ENCODE measurements at regions of chrX and their contacts with region 1.

Region 1: DNA sequence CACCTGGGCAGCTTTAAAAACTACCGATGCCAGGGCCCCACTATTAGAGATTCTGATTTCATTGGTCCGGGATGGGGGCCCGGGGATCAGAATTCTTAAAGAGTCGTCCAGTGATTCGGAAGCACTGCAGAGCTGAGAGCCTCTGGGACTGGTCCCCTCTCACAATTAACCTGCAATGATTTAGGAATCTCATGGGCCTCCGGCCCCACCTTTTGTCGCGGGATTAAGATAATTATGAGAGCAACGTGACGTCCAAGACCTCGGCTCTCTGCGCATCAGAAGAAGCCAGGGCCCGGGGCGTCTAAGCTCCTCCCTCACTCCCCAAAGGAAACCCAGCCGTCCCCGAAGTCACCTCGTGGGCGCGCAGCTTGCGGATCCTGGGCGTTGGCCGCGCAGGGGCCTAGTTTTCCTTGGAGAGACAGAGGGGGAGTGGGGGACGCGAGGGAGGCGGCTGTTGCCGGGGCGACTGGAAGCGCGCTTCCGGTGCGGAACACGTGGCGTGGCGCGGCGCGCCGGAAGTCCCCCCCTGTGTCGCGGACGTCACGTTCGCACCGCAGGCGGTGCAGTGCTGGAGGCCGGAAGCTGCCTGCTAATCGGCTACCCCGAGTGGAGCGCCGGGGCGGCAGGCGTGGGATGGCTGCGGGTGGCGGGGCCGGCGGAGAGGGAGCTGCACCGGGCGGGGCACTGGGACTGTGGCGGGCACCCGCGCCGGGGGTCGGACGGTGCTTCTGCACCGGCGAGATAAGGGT is at the start of gene GEMIN8:
- DNase-seq: peak; percentile 76
- ATAC-seq: peak; percentile 91
- H3K4me3 Mint-ChIP-seq: peak within 1 kb of the TSS; percentile 94
- H3K27ac Mint-ChIP-seq: peak within 1 kb of the TSS; percentile 97
- H3K4me1 Mint-ChIP-seq: peaks cover 30% of the 10 kb centered on the region
- H3K27me3 Mint-ChIP-seq: no peaks in the 10 kb centered on the region
- CTCF ChIP-seq: no peak
- total RNA-seq, gene GEMIN8: 19.3 and 19.9 TPM in 2 replicates

Region 2: DNA sequence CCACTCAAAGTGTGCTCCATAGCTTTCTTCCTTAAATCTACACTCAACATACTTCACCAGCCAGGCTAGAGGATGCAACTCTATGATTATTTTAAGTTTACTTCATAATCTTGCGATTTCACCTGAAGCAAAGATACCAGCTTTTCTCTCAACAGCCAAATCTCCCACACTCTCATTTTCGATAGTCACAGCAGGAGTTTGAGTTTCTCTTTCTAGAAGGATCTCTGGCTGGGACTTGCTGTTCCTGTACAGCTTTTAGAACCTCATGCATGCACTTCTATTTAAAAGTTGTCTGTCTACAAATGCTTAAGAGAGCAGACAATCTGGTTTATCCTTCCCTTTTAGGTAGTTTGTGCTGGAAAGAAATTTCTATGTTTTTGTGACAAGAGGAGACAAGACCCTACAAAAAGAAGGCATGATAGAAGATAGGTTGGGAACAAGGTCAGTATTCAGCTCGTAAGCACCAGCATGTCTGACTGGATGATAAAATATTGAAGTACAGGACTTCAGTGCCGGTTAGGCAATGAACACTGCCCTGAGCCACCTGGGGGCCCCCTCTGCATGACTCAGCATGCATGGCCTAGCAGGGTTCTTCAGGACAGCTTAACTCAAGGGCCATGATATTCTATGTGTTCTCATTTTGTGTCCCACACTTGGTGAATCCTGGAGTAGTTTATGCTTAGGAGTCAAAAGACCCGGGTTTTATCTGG is 775.4 kb before region 1 on chrX:
- CTCF ChIA-PET with region 1: no interaction called
- POLR2A ChIA-PET with region 1: no interaction called
- intact Hi-C with region 1: loop called (anchors 5 kb)
- DNase-seq: no peak
- ATAC-seq: no peak
- H3K4me3 Mint-ChIP-seq: peak overlapping the region; percentile 28
- H3K27ac Mint-ChIP-seq: peak overlapping the region; percentile 74
- H3K4me1 Mint-ChIP-seq: peaks cover 72% of the 10 kb centered on the region
- H3K27me3 Mint-ChIP-seq: no peaks in the 10 kb centered on the region
- CTCF ChIP-seq: no peak

Region 3: DNA sequence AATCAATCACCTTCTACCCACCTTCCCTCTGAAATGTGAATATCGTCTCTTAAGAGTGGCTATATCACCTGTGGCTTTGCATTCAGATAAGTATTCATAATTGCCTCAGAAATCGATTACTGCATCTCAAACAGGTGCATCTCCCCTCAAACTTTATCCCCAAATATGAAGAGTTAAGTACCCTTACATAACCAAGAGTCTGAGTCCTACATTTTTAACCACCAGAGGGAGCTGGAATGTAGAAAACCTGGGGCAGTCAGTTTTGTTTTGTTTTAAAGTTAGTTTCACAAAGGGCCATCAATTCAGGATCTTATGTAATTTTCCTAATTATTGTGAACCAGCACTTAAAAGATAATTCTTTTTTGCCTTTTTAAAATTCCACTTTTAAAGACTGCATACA is 371.0 kb before region 1 on chrX:
- CTCF ChIA-PET with region 1: interaction called, 3 read pairs
- POLR2A ChIA-PET with region 1: interaction called, 3 read pairs
- intact Hi-C with region 1: loop called (anchors 1 kb)
- DNase-seq: no peak
- ATAC-seq: peak; percentile 37
- H3K4me3 Mint-ChIP-seq: no peak overlapping the region
- H3K27ac Mint-ChIP-seq: peak overlapping the region; percentile 46
- H3K4me1 Mint-ChIP-seq: peaks cover 14% of the 10 kb centered on the region
- H3K27me3 Mint-ChIP-seq: no peaks in the 10 kb centered on the region
- CTCF ChIP-seq: no peak

Region 4: DNA sequence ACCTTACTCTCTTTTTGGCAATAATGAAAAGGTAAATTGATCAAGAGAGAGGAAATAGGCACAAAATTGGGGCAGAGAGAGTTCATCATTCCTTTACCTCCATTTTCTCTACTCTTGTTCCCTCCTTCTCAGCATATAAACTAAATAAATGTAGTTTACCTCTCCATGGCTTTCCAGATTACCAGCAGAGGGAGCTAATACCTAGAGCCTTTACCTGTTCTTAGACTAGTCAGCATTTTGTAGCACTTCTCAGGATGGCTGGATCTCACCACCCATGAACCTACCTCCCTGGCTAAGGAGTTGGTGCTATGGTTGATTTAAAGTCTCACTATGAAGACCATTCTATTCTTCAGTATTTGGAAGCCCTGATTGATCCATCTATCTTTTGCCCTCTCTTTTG is 279.4 kb before region 1 on chrX:
- CTCF ChIA-PET with region 1: interaction called, 3 read pairs
- POLR2A ChIA-PET with region 1: interaction called, 5 read pairs
- intact Hi-C with region 1: loop called (anchors 1 kb)
- DNase-seq: no peak
- ATAC-seq: peak; percentile 49
- H3K4me3 Mint-ChIP-seq: no peak overlapping the region
- H3K27ac Mint-ChIP-seq: peak overlapping the region; percentile 41
- H3K4me1 Mint-ChIP-seq: peaks cover 42% of the 10 kb centered on the region
- H3K27me3 Mint-ChIP-seq: no peaks in the 10 kb centered on the region
- CTCF ChIP-seq: no peak

Region 5: DNA sequence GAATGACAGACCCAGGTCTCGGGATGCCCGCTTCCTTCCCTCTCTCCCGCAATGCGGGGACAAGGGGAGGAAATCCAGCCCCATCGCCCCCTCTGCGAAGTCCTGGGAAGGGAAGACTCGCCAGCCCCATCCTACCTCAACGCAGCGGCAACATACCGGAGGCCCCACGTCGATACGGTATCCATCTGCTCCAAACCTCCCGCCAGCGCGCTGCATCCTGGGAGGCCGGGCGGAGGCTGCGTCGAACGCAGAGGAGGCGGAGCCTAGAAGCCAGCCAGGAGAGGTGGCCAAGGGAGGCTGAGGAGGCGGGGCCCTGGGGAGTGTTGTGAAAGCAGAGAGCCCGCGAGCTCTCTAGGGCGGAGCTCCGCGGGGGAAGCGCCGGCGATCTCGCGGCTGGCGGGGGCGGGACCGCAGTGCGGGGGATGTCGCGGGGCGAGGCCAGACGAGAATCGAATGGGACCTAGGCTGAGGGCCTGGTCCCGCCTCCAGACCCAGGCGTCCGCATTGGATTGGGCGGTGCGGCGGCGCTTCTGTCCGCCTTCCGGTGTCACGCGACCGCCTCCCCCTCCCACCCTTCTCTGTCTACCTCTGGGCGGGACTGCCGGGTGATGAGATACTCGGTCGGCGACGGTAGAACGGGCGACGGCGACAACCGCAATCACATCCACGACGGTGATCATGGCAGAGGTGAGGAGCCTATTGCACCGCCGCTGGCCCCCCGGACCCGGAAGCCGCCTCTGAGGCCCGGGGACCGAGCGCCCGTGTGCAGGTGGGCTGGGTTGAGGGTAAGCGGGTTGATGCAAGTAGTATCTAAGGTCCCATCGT is 843.5 kb after region 1 on chrX and contains the starts of genes FANCB and MOSPD2:
- CTCF ChIA-PET with region 1: no interaction called
- POLR2A ChIA-PET with region 1: no interaction called
- intact Hi-C with region 1: loop called (anchors 1 kb)
- DNase-seq: peak; percentile 82
- ATAC-seq: peak; percentile 93
- H3K4me3 Mint-ChIP-seq: peak within 1 kb of the TSS; percentile 87
- H3K27ac Mint-ChIP-seq: peak within 1 kb of the TSS; percentile 83
- H3K4me1 Mint-ChIP-seq: peaks cover 7% of the 10 kb centered on the region
- H3K27me3 Mint-ChIP-seq: no peaks in the 10 kb centered on the region
- CTCF ChIP-seq: no peak
- total RNA-seq, gene FANCB: 3.9 and 4.0 TPM in 2 replicates
- total RNA-seq, gene MOSPD2: 15.6 and 19.7 TPM in 2 replicates